Kidney (tissue), 22 donors: ENCODE measurements at regions of chr1 and their contacts with region 1.

Region 1: GRCh38 chr1:89812992-89813391 is 7.8 kb upstream of the LRRC8D start:
- DNase-seq: no peak
- H3K4me3 ChIP-seq: no peak overlapping the region
- H3K27ac ChIP-seq: no peak overlapping the region
- H3K4me1 ChIP-seq: no peaks in the 10 kb centered on the region
- H3K27me3 ChIP-seq: no peaks in the 10 kb centered on the region
- CTCF ChIP-seq: no peak

Region 2: DNA sequence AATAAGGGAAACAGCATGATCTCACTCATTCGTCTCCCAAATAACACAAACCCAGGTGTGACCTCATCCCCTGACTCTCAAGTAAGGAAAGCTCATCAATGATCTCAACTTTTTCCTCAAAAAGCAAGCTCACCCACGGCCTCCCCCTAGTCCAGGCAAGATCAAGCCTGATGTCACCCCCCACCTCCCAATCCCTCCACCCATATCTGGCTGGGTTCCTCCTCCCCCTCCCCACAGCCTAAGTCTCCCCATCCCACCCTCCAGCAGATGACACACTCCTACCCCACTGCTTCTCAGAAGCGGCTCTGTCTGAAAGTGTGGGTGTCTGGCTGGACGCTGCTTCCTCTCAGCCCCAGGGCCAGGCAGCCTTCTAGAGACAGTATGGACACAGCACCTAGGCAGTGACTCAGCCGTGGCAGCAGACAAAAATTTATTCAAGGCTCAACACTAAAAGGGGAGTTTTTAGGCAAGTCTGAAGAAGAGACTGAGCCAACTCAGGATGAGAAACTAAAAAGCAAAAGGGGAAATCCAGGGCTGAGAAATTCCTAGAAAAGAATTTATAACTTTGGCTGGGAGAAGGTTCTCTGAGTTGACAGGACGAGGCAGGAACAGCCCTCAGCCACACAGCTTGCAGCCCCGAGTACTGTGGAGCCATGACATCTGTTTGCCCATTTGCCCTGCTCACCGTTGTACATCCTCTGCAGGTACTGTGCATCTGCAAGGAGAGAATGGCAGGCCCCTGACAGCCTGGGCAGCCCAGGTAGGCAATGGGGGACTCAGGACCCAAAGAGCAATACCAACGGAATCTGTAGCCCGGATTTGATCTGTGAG is 73.8 kb before region 1 on chr1:
- intact Hi-C with region 1: no loop called
- DNase-seq: no peak
- H3K4me3 ChIP-seq: no peak overlapping the region
- H3K27ac ChIP-seq: no peak overlapping the region
- H3K4me1 ChIP-seq: no peaks in the 10 kb centered on the region
- H3K27me3 ChIP-seq: no peaks in the 10 kb centered on the region
- CTCF ChIP-seq: no peak

Region 3: DNA sequence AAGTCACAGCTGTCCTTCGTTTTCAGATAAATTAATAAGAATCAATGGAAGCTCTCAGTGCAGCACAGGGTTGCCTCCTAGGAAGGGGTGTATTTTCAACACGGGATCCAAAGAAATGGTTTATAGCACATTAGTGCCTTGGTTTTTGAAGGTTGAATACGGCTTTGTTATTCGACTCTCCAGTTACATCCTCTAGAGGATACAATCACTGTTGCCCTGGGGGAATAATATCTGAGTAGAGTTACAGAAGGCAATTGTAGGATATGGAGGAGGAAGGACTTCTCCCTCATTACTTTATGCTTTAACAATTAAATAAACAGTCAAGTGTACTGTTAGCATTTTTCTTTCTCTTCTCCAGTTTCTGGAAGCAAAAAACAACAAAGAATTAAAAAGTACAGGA is 167.6 kb after region 1 on chr1:
- intact Hi-C with region 1: loop called (anchors 5 kb)
- DNase-seq: peak in 2 of 5 donors; percentile 34 to 42
- H3K4me3 ChIP-seq: no peak overlapping the region
- H3K27ac ChIP-seq: no peak overlapping the region
- H3K4me1 ChIP-seq: no peaks in the 10 kb centered on the region
- H3K27me3 ChIP-seq: no peaks in the 10 kb centered on the region
- CTCF ChIP-seq: no peak